ENCODE measurements at regions of chr5 and their contacts with region 1.

Region 1: GRCh38 chr5:112976432-112977309 is at the start of gene DCP2:
- DNase-seq: peak; percentile 97
- ATAC-seq: peak; percentile 99
- total RNA-seq, gene DCP2: 18.1 TPM

Region 2: GRCh38 chr5:111929867-111930266 is 1046.8 kb before region 1 on chr5:
- intact Hi-C with region 1: no loop called
- DNase-seq: no peak
- ATAC-seq: peak; percentile 73

Region 3: DNA sequence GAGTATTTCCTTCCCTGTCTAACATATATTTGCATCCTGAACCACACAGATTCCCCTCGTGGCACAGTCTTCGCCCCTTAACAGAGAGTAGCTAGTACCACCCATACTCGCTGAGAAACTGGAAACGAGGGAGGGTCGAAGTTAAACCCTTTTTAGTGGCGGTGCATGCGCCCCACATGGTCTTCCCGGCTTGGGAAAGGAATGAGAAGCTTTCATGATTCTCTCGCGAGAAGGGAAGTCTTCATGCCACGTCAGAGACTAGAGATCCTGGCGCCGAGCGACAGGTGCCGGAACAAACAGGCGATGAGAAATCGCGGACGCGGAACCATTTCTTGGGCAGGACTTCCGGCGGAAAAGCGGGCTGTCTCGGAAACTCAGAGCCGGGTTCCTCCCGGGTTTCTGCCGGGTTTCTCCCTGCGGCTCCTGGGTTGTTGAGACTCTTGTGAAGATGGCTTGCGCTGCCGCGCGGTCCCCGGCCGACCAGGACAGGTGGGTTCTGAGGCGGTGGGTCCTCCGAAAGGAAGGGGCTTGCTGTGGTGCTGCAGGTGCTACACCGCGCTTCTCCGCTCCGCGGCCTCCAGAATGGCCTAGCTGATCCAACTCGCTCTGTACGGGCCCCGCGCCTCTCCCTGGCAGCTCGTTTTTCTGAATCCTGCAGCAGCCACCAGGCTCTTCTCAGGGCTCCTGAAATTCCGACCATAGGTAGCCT is 115.6 kb before region 1 on chr5 and contains the start of gene SRP19:
- intact Hi-C with region 1: loop called (anchors 5 kb)
- DNase-seq: peak; percentile 97
- ATAC-seq: peak; percentile 94
- total RNA-seq, gene SRP19: 24.8 TPM

Measured in Right ventricle myocardium inferior (tissue), 1 donor.